ENCODE measurements at regions of chr1 and their contacts with region 1.

Region 1: GRCh38 chr1:50332941-50333594 is 90.2 kb downstream of the DMRTA2 start:
- DNase-seq: peak; percentile 82
- CTCF ChIP-seq: peak; percentile 91

Region 2: GRCh38 chr1:49971088-49971487 is 362.0 kb before region 1 on chr1:
- CTCF ChIA-PET with region 1: no interaction called
- POLR2A ChIA-PET with region 1: no interaction called
- DNase-seq: no peak
- CTCF ChIP-seq: no peak

Region 3: DNA sequence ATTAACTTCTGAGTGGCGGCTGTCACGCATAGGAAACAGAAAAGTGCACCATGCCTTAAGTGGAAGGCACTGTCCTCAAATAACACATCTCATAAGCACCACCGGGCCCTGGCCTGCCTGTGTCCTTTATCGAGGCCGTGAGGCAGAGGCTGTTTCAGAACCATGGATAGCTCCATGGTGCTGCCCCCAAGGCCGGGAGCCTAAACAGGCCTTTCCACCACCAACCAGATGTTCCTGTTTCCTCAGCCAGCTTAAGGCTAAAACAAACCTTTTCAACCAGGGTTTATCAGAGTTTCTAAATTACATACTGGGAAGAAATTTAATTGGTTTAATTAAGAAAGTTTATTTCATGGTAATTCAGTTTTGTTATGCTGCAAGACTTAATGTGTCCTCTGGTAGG is 24.2 kb before region 1 on chr1:
- CTCF ChIA-PET with region 1: interaction called, 16 read pairs
- POLR2A ChIA-PET with region 1: no interaction called
- DNase-seq: peak; percentile 35
- CTCF ChIP-seq: no peak

Region 4: DNA sequence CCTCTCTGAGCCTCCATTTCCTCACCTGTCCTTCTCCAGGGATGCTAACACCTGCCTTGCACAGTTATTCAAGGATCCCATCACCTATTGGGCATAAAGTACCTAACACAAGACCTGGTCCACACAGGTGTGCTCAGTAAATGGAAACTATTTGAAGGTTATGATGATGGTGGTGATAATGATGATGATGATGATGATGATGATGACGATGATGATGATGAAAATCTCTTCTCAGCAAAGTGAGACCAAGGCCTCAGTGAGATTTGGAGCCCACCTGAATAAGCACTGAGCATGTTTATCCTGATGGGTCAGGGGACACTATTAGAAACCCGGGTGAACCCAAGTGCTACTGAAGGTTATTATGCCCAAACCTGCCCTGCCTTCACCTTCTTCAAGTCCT is 10.5 kb before region 1 on chr1:
- CTCF ChIA-PET with region 1: interaction called, 19 read pairs
- POLR2A ChIA-PET with region 1: no interaction called
- DNase-seq: no peak
- CTCF ChIP-seq: no peak

Region 5: DNA sequence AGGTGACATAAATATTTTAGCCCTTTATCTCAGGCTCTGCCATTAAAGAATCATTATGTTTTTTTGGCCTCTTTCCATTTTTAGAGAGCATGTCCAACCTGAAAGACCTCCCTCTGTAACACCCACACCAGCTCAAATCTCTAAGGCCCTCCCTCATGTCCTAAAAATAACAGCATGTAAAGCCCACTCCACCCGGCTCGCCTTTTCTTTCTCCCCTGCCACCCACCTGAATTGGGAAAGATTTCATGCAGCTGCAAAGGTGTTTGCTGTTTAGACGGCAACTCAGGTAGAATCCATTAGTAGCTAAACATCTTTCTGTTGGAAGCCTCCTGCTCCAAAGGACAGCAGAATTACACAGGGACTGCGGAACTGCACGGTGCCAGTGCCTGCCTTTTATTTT is 10.3 kb after region 1 on chr1:
- CTCF ChIA-PET with region 1: interaction called, 64 read pairs
- POLR2A ChIA-PET with region 1: no interaction called
- DNase-seq: no peak
- CTCF ChIP-seq: no peak

Region 6: DNA sequence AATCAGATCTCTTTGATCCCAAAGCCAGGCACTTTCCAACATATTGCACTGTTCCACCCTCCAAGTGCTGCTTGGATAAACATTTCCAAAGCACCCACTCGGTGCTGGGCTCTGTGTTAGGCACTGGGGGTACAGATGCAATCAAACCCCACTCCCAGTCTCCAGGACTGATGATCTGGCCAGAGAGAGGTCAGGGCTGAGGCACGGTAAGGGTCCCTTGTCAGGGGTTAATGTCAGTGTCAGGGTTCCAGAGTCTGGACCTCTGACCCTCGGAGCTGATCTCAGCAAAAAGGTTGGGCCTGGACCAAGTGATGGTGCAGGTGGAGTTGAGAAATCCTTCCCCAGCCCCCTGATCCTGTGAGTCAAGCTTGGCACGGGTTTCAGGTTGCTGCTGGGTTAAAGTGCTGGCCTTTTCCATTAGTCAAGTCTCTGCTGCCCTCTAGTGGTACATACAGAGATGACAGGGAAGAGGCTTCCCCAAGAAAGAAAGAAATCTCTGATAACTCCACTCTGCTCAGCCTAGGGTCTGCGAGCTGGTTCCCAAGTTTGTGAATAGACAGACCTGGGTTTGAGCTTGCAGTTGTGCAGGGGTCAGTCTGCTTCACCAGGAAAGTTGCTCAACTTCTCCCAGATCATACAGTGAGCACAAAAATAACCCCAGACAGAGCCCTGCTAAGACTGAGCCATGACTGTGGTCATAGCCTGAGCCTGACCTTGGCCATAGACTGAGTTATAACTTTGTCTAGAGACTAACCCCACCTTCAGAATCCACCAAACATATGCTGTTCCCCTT is 15.6 kb after region 1 on chr1:
- CTCF ChIA-PET with region 1: interaction called, 64 read pairs
- POLR2A ChIA-PET with region 1: no interaction called
- DNase-seq: peak; percentile 76
- CTCF ChIP-seq: peak; percentile 74

Measured in GM10248 (cell line).